ENCODE measurements at regions of chr1 and their contacts with region 1.

Region 1: DNA sequence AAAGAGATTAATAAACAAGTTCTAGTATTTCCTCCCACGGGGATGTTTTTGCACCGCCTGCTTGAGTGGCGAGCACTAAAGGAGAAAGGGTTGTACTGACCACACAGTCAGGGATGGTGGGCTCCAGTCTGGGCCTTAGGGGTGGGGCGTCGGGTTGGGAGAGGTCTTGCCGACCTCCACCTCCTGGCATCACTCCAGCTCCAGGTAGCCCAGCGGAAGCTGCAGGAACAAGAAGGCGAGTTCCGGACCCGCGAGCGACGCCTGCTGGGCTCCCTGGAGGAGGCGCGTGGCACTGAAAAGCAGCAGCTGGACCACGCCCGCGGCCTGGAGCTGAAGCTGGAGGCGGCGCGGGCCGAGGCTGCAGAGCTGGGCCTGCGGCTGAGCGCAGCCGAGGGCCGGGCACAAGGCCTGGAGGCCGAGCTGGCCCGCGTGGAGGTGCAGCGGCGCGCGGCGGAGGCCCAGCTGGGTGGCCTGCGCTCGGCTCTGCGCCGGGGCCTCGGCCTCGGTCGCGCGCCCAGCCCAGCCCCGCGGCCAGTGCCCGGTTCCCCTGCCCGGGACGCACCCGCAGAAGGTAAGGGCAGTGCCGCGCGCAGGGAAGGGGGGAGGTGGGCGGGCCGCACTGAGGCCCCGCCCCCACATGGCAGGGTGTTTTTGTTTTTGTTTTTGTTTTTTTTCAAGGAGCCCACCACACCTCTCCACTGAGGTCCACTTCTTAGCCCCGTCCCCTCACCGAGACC is 19.7 kb downstream of the MFAP2 start:
- DNase-seq: peak; percentile 92
- ATAC-seq: peak; percentile 90
- H3K4me3 Mint-ChIP-seq: peak overlapping the region; percentile 65
- H3K27ac Mint-ChIP-seq: peak overlapping the region; percentile 69
- H3K4me1 Mint-ChIP-seq: peaks cover 5% of the 10 kb centered on the region
- H3K27me3 Mint-ChIP-seq: no peaks in the 10 kb centered on the region

Region 2: GRCh38 chr1:16286122-16286521 is 674.6 kb before region 1 on chr1:
- CTCF ChIA-PET with region 1: no interaction called
- POLR2A ChIA-PET with region 1: no interaction called
- intact Hi-C with region 1: no loop called
- DNase-seq: no peak
- ATAC-seq: no peak
- H3K4me3 Mint-ChIP-seq: no peak overlapping the region
- H3K27ac Mint-ChIP-seq: no peak overlapping the region
- H3K4me1 Mint-ChIP-seq: peaks cover 2% of the 10 kb centered on the region
- H3K27me3 Mint-ChIP-seq: no peaks in the 10 kb centered on the region

Region 3: DNA sequence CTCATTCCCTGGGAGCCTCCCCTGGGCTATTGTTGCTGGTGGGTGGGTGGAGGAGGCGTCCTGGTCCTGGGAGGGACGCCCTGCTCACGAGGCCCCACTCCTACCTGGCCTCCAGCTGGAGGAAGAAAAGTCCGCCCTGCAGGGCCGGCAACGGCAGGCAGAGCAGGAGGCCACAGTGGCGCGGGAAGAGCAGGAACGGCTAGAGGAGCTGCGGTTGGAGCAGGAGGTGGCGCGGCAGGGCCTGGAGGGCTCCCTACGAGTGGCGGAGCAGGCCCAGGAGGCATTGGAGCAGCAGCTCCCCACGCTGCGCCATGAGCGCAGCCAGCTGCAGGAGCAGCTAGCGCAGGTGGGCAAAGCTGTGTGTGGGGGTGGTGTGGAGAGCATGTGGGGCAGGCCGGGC is 14.1 kb before region 1 on chr1:
- CTCF ChIA-PET with region 1: interaction called, 22 read pairs
- POLR2A ChIA-PET with region 1: interaction called, 3 read pairs
- intact Hi-C with region 1: no loop called
- DNase-seq: no peak
- ATAC-seq: no peak
- H3K4me3 Mint-ChIP-seq: no peak overlapping the region
- H3K27ac Mint-ChIP-seq: no peak overlapping the region
- H3K4me1 Mint-ChIP-seq: no peaks in the 10 kb centered on the region
- H3K27me3 Mint-ChIP-seq: no peaks in the 10 kb centered on the region

Region 4: DNA sequence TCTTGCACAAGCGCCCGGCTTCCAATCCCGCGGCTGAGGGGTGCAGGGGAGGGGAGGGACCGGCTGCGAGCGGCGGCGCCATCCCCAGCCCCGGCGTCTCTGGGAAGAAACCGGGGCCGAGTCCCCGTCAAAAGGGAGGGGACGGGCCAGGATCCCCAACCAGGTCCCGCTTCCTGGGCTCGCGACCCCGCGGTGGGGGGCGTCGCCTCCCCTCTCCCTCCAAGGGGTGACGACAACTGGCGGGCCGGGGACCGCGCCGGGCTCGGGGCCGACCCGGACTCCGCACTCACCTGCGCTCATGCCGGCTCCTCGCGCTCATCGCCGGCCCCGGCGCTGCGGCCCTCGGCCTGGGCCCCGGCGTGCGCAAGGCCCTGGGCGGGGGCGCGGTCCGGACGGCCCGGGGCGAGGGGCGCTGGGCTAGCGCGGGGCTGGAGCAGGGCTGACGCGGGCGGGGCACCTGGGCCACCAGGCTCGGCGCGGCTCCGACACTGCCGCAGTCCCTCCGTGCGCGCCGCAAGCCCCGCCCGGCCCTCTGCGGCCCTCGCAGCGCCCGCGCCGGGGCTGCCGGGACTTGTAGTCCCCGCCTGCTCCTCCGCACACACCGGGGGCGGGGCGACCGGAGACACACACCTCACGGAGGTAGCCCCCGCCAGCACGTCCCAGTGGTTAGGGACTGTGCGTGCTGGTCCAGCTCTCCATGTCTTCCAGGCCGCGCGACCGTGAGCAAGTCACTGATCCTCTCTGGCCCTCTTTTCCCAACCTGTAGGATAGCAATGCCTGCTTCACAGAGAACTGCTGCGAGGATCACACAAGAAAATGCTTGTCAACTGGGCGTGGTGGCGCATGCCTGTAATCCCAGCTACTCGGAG is 50.9 kb after region 1 on chr1 and contains the start of gene ATP13A2:
- CTCF ChIA-PET with region 1: interaction called, 5 read pairs
- POLR2A ChIA-PET with region 1: no interaction called
- intact Hi-C with region 1: loop called (anchors 2 to 5 kb)
- DNase-seq: peak; percentile 90
- ATAC-seq: peak; percentile 99
- H3K4me3 Mint-ChIP-seq: peak within 1 kb of the TSS; percentile 79
- H3K27ac Mint-ChIP-seq: peak within 1 kb of the TSS; percentile 55
- H3K4me1 Mint-ChIP-seq: peaks cover 20% of the 10 kb centered on the region
- H3K27me3 Mint-ChIP-seq: no peaks in the 10 kb centered on the region
- total RNA-seq, gene ATP13A2: 30.7 to 32.0 TPM

Region 5: GRCh38 chr1:17045634-17046333 is 85.1 kb after region 1 on chr1:
- CTCF ChIA-PET with region 1: interaction called, 12 read pairs
- POLR2A ChIA-PET with region 1: no interaction called
- intact Hi-C with region 1: loop called in 1 of 2 experiments (anchors 2 kb)
- DNase-seq: no peak
- ATAC-seq: no peak
- H3K4me3 Mint-ChIP-seq: no peak overlapping the region
- H3K27ac Mint-ChIP-seq: peak overlapping the region; percentile 42
- H3K4me1 Mint-ChIP-seq: peaks cover 9% of the 10 kb centered on the region
- H3K27me3 Mint-ChIP-seq: no peaks in the 10 kb centered on the region

Region 6: DNA sequence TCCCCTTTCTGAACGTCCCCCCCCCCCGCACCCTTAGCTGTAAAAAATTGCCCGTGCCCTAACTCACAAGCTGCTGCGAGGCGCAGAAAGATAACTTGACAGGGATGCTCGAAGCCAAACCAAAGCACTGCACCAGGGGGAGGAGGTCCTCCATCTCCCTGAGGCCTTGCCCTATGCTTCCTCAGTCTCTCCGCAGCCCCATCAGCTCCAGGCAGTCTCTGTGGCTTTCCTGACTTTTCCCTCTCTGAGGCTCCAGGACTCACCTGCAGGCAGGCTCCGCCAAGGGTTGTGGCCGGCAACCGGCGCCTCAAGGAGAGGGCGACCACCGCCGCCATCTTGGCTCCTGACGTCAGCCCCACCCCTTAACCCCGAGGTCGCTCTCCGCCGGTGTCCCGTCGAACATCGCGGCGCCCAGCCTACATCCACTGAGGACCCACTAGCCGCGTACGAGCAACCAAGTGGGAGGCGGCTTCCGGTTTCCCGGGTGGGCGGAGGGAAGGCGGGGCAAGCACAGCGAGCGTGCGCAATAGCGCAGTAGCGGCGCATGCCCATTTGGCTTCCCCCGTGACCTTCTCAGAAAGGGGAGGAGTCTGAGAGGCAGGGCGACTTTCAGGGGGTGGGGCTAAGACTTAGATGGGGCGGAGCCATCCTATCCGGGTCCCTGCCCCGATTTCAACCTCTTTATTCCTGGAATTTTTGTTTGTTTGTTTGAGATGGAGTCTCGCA is 93.1 kb after region 1 on chr1 and contains the start of gene SDHB:
- CTCF ChIA-PET with region 1: interaction called, 12 read pairs
- POLR2A ChIA-PET with region 1: no interaction called
- intact Hi-C with region 1: no loop called
- DNase-seq: peak; percentile 100
- ATAC-seq: peak; percentile 99
- H3K4me3 Mint-ChIP-seq: peak within 1 kb of the TSS; percentile 94
- H3K27ac Mint-ChIP-seq: peak within 1 kb of the TSS; percentile 97
- H3K4me1 Mint-ChIP-seq: peaks cover 21% of the 10 kb centered on the region
- H3K27me3 Mint-ChIP-seq: peaks cover 3% of the 10 kb centered on the region
- total RNA-seq, gene SDHB: 132 to 149 TPM

Region 7: GRCh38 chr1:17109892-17110554 is 149.3 kb after region 1 on chr1:
- CTCF ChIA-PET with region 1: no interaction called
- POLR2A ChIA-PET with region 1: no interaction called
- intact Hi-C with region 1: no loop called
- DNase-seq: no peak
- ATAC-seq: no peak
- H3K4me3 Mint-ChIP-seq: no peak overlapping the region
- H3K27ac Mint-ChIP-seq: no peak overlapping the region
- H3K4me1 Mint-ChIP-seq: no peaks in the 10 kb centered on the region
- H3K27me3 Mint-ChIP-seq: peaks cover 11% of the 10 kb centered on the region